IMR-90 (cell line): ENCODE measurements at regions of chr20 and their contacts with region 1.

Region 1: GRCh38 chr20:52031563-52032303 is 159.8 kb downstream of the ZFP64 start:
- DNase-seq: peak; percentile 88
- ATAC-seq: peak; percentile 96
- H3K4me3 ChIP-seq: no peak overlapping the region
- H3K27ac ChIP-seq: peak overlapping the region; percentile 96
- H3K4me1 ChIP-seq: peaks cover 17% of the 10 kb centered on the region
- H3K27me3 ChIP-seq: no peaks in the 10 kb centered on the region
- CTCF ChIP-seq: no peak
- POLR2A ChIP-seq: no peak
- RAD21 ChIP-seq: no peak

Region 2: GRCh38 chr20:51688600-51689244 is 343.0 kb before region 1 on chr20:
- CTCF ChIA-PET with region 1: no interaction called
- POLR2A ChIA-PET with region 1: interaction called, 12 read pairs
- dilution Hi-C with region 1: no loop called
- in situ Hi-C with region 1: no loop called
- intact Hi-C with region 1: no loop called
- DNase-seq: no peak
- ATAC-seq: no peak
- H3K4me3 ChIP-seq: no peak overlapping the region
- H3K27ac ChIP-seq: no peak overlapping the region
- H3K4me1 ChIP-seq: peaks cover 2% of the 10 kb centered on the region; the same call in 1 of the 2 replicates
- H3K27me3 ChIP-seq: no peaks in the 10 kb centered on the region
- CTCF ChIP-seq: no peak
- POLR2A ChIP-seq: no peak
- RAD21 ChIP-seq: no peak

Region 3: DNA sequence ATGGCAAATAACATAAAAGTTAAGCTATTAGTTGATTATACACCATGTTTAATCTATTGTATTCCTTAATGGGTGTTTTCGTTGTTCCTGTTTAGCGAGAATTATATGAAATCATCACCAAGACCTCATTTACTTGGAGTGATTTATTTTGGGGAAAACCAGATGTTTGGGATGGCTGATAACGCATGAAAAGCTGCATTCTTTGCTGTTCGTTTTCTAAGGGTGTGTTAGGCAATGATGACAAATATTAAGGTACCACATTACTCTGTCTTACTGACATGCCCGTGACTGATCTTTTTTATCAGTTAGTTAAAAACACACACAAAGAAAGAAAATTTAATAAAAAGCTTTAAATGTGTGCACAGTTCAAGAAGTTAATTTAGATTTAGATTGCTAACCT is 16.6 kb before region 1 on chr20:
- CTCF ChIA-PET with region 1: no interaction called
- POLR2A ChIA-PET with region 1: interaction called, 14 read pairs
- dilution Hi-C with region 1: no loop called
- in situ Hi-C with region 1: no loop called
- intact Hi-C with region 1: no loop called
- DNase-seq: no peak
- ATAC-seq: no peak
- H3K4me3 ChIP-seq: no peak overlapping the region
- H3K27ac ChIP-seq: no peak overlapping the region
- H3K4me1 ChIP-seq: 0 out of 2 replicates have a peak, but pooled peaks cover 2% of the 10 kb centered on the region
- H3K27me3 ChIP-seq: no peaks in the 10 kb centered on the region
- CTCF ChIP-seq: no peak
- POLR2A ChIP-seq: no peak
- RAD21 ChIP-seq: no peak